AG04450 (cell line): ENCODE measurements at regions of chr2 and their contacts with region 1.

Region 1: GRCh38 chr2:113370478-113371091 is 66.9 kb upstream of the ZNG1B start:
- DNase-seq: peak; percentile 43
- H3K4me3 ChIP-seq: no peak overlapping the region
- H3K27ac ChIP-seq: no peak overlapping the region
- H3K27me3 ChIP-seq: peaks cover 5% of the 10 kb centered on the region
- CTCF ChIP-seq: peak; percentile 75

Region 2: DNA sequence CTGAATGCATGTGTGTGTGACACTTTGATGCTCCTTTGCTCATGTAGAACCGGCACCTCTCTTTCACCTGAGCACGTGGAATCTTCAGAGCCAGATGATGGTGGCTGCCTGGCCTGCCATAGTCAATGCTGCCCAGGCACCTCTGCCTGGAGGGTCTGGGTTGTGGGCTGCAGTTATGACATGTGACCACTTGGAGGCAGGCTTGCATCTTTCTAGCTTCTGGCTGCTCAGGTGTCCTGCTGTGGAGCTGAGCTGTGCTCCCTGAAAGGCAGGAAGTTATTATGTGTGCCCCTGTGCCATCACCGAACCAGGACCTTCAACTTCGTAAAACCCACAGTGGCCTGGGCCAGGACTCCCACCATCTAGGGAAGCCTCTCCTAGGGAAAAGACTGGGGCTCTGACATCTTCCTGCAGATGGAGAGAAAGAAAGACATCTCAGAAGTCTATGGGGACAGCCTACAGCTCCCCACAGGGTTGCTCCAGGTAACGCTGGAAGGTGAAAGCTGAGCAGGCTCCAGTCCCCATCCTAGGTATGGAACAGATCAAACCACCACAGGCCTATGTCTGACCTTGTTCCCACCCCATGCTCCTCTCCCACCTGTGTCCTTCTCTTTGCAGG is 166.6 kb before region 1 on chr2:
- CTCF ChIA-PET with region 1: interaction called, 85 read pairs
- POLR2A ChIA-PET with region 1: no interaction called
- DNase-seq: no peak
- H3K4me3 ChIP-seq: no peak overlapping the region
- H3K27ac ChIP-seq: no peak overlapping the region
- H3K27me3 ChIP-seq: no peaks in the 10 kb centered on the region
- CTCF ChIP-seq: peak; percentile 85

Region 3: GRCh38 chr2:113211226-113212105 is 159.1 kb before region 1 on chr2:
- CTCF ChIA-PET with region 1: interaction called, 85 read pairs
- POLR2A ChIA-PET with region 1: no interaction called
- DNase-seq: no peak
- H3K4me3 ChIP-seq: no peak overlapping the region
- H3K27ac ChIP-seq: peak overlapping the region; percentile 11
- H3K27me3 ChIP-seq: no peaks in the 10 kb centered on the region
- CTCF ChIP-seq: no peak

Region 4: DNA sequence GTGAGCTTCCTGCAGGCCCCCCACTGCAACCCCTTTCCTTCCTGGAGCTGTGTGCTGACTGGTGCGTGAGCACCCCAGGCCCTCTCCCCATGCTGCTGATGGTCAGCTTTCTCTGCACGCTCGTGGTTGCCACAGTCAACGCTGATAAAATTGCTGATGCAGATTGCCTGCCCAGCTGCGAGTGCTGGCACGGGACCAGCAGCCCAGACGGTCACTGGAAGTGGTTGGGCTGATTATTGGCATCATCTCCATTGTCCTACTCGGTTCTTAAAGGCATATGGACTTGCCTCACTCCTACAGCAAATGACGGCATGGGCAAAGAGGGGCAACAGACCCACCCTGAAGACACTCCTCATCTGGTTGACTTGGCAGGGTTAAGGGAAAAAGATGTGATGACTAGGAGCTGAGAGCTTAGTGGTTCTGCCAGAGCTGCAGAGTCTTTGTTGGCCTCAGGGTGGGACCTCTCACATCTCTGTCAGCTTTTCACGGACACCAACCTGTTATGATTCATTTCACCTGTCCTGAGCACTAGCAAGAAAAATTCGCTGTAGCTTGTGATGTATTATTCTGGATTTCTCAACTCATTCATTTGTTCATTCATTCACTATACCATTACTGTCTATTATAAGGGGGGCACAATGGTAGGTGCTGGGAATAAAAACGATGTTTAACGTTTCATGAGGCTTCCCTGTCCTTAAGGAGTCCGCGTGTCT is 130.3 kb before region 1 on chr2:
- CTCF ChIA-PET with region 1: interaction called, 75 read pairs
- POLR2A ChIA-PET with region 1: no interaction called
- DNase-seq: peak; percentile 83
- H3K4me3 ChIP-seq: peak overlapping the region; percentile 10
- H3K27ac ChIP-seq: peak overlapping the region; percentile 95
- H3K27me3 ChIP-seq: no peaks in the 10 kb centered on the region
- CTCF ChIP-seq: 0 out of 2 replicates have a peak, but pooled peaks have one; percentile 10

Region 5: GRCh38 chr2:113248997-113249770 is 121.4 kb before region 1 on chr2:
- CTCF ChIA-PET with region 1: interaction called, 75 read pairs
- POLR2A ChIA-PET with region 1: no interaction called
- DNase-seq: peak; percentile 42
- H3K4me3 ChIP-seq: no peak overlapping the region
- H3K27ac ChIP-seq: no peak overlapping the region
- H3K27me3 ChIP-seq: no peaks in the 10 kb centered on the region
- CTCF ChIP-seq: peak; percentile 96

Region 6: DNA sequence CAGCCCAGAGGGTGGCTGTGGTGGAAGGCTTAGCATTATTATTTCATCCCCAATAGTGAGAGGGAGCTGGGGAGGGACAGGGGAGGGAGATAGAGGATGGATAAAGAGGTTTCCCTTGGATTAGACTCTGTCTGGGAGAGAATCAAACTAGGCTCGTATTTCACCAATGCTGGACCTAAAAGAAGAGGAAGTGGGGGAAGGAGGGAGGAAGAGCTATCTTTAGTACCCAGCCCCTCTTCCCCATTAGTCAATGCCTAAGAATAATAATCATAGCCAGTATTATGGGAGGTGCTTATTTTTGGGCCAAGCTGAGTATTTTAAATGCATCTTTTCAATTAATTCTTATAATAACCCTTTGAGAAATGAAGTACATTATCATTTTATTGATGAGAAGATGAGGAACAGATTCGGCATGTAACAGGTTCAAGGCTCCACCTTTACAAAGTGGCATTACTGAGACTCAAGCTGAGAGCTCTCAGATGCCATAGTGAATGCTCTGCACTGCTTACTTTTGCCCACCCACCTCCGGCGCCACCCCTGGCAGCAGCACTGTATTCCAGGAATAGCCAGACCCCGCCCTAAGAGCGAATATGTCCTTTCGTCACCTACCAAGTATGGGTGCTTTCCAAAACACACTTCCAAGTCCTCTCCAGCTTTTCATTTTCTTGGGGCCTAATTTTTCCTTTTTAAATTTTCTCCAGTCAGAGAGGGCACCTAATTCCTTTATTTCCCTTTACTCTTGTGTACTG is 112.9 kb before region 1 on chr2:
- CTCF ChIA-PET with region 1: interaction called, 24 read pairs
- POLR2A ChIA-PET with region 1: no interaction called
- DNase-seq: no peak
- H3K4me3 ChIP-seq: no peak overlapping the region
- H3K27ac ChIP-seq: no peak overlapping the region
- H3K27me3 ChIP-seq: no peaks in the 10 kb centered on the region
- CTCF ChIP-seq: no peak